PC-9 (cell line): ENCODE measurements at regions of chr1 and their contacts with region 1.

Region 1: GRCh38 chr1:104795931-104796330 is 1046.2 kb downstream of the AMY1C start:
- DNase-seq: no peak
- H3K4me3 ChIP-seq: no peak overlapping the region
- H3K27ac ChIP-seq: no peak overlapping the region
- H3K4me1 ChIP-seq: no peaks in the 10 kb centered on the region
- H3K27me3 ChIP-seq: no peaks in the 10 kb centered on the region
- CTCF ChIP-seq: no peak

Region 2: DNA sequence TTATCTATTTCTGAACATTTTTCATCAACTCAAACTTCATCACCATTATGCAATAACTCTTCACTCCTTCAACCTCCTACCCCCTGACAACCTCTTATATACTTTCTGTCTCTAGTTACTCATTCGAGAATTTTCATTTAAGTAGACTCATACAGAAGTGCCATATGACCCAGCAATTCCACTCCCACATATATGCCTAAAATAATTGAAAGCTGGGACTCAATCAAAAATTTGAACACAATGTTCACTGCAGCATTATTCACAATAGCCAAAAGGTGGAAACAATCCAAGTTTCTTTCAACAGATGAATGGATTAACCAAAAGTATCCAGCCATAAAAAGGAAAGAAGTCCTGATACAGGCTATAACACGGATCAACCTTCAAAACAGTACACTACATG is 1711.8 kb before region 1 on chr1:
- CTCF ChIA-PET with region 1: interaction called, 16 read pairs
- POLR2A ChIA-PET with region 1: no interaction called
- intact Hi-C with region 1: no loop called
- DNase-seq: no peak
- H3K4me3 ChIP-seq: no peak overlapping the region
- H3K27ac ChIP-seq: no peak overlapping the region
- H3K4me1 ChIP-seq: no peaks in the 10 kb centered on the region
- H3K27me3 ChIP-seq: no peaks in the 10 kb centered on the region
- CTCF ChIP-seq: no peak

Region 3: DNA sequence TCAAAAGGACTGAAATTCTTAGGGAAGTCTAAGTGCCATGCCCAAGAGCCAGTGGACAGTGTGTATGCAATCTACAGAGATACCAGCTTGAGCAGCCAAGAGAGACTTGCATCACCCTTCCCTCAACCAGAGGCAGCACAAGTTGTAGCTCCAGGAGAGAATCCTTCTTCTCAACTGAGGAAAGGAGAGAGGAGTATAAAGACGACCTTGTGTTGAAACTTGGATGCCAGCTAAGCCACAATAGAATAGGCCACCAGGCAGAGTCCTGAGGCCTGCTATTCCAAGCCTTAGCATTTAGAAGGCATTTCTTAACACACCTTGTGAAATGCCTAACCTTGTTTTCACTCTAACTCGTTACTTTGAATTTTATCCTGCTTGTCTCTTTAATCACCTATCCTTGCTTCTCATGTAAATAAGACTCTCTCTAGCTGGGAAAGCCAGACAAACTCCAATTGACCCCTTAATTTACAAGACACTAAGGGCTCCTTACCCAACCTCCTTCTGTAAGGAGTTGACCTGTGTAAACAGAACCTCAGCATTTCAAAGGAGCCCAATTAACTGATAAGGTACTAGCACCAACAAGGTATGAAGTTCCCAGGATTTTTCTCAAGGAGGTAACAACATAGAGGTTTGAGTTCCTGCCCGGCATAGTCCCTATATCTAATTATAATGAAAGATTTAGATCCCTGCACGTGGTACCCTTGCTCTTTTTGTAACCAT is 307.5 kb before region 1 on chr1:
- CTCF ChIA-PET with region 1: no interaction called
- POLR2A ChIA-PET with region 1: no interaction called
- intact Hi-C with region 1: no loop called
- DNase-seq: no peak
- H3K4me3 ChIP-seq: no peak overlapping the region
- H3K27ac ChIP-seq: no peak overlapping the region
- H3K4me1 ChIP-seq: no peaks in the 10 kb centered on the region
- H3K27me3 ChIP-seq: no peaks in the 10 kb centered on the region
- CTCF ChIP-seq: no peak